Activated T-helper 2 cell treated with anti-CD3 and anti-CD28 coated beads, Interferon-gamma antibody, Interleukin-2, Interleukin-4, amounts not matched to agents 10 μg/mL and 5 μg/mL and 100 μg/mL, durations not matched to agents 14 hours and 24 hours and 36 hours (primary cell): ENCODE measurements at regions of chr9 and their contacts with region 1.

Region 1: GRCh38 chr9:91193658-91194391 is 167.9 kb downstream of the AUH start:
- DNase-seq: peak; percentile 87
- H3K4me3 Mint-ChIP-seq: peak overlapping the region; percentile 77
- H3K27ac Mint-ChIP-seq: peak overlapping the region; percentile 96
- H3K4me1 Mint-ChIP-seq: peaks cover 66% of the 10 kb centered on the region
- H3K27me3 Mint-ChIP-seq: no peaks in the 10 kb centered on the region

Region 2: GRCh38 chr9:91036826-91037510 is 156.9 kb before region 1 on chr9:
- intact Hi-C with region 1: loop called (anchors 1 kb)
- DNase-seq: peak; percentile 79
- H3K4me3 Mint-ChIP-seq: peak overlapping the region; percentile 49
- H3K27ac Mint-ChIP-seq: peak overlapping the region; percentile 88
- H3K4me1 Mint-ChIP-seq: peaks cover 61% of the 10 kb centered on the region
- H3K27me3 Mint-ChIP-seq: no peaks in the 10 kb centered on the region

Region 3: GRCh38 chr9:91101611-91102168 is 92.1 kb before region 1 on chr9:
- intact Hi-C with region 1: loop called (anchors 1 kb)
- DNase-seq: peak; percentile 85
- H3K4me3 Mint-ChIP-seq: peak overlapping the region; percentile 78
- H3K27ac Mint-ChIP-seq: peak overlapping the region; percentile 93
- H3K4me1 Mint-ChIP-seq: peaks cover 64% of the 10 kb centered on the region
- H3K27me3 Mint-ChIP-seq: no peaks in the 10 kb centered on the region

Region 4: DNA sequence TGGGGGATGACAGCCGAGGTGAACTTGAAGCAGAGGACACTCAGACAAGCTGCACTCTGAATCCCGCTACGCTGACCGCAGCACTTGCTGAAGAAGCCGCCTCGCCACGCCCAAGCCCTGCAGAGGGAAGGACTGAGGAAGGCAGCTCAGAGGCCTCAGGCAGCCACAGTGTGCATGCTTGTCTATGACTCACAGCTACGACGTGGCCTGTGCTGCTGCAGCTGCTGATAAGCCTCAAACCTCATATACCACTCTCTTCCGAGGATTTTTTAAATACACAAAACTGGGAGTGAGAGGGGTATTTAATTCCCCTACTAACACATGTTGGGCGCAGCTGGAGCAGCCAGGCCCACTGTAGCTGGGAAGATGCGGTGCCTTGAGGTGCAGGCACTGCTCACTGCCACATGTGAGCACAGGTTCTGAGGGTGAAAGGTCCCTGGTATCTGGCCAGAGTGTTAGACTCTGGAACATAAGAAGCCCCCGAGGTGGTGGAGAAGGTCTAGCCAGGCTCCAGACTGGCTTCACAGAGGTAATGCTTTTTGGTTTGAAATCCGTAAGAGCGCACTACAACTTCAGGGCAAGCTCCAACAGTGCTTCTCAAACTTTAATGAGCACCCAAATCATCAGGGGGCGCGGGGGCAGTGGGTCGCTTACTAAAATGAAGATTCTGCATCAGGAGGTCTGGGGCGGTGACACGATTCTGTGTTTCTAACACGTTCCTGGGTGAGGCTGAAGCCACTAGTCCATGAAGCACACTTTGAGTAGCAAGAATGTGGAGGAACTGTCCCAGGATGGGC is 28.9 kb before region 1 on chr9:
- intact Hi-C with region 1: loop called (anchors 1 kb)
- DNase-seq: peak; percentile 82
- H3K4me3 Mint-ChIP-seq: peak overlapping the region; percentile 84
- H3K27ac Mint-ChIP-seq: peak overlapping the region; percentile 98
- H3K4me1 Mint-ChIP-seq: peaks cover 58% of the 10 kb centered on the region
- H3K27me3 Mint-ChIP-seq: no peaks in the 10 kb centered on the region

Region 5: GRCh38 chr9:91245431-91246313 is 51.8 kb after region 1 on chr9:
- intact Hi-C with region 1: loop called (anchors 1 kb)
- DNase-seq: no peak
- H3K4me3 Mint-ChIP-seq: peak overlapping the region; percentile 10
- H3K27ac Mint-ChIP-seq: peak overlapping the region; percentile 80
- H3K4me1 Mint-ChIP-seq: peaks cover 62% of the 10 kb centered on the region
- H3K27me3 Mint-ChIP-seq: no peaks in the 10 kb centered on the region

Region 6: DNA sequence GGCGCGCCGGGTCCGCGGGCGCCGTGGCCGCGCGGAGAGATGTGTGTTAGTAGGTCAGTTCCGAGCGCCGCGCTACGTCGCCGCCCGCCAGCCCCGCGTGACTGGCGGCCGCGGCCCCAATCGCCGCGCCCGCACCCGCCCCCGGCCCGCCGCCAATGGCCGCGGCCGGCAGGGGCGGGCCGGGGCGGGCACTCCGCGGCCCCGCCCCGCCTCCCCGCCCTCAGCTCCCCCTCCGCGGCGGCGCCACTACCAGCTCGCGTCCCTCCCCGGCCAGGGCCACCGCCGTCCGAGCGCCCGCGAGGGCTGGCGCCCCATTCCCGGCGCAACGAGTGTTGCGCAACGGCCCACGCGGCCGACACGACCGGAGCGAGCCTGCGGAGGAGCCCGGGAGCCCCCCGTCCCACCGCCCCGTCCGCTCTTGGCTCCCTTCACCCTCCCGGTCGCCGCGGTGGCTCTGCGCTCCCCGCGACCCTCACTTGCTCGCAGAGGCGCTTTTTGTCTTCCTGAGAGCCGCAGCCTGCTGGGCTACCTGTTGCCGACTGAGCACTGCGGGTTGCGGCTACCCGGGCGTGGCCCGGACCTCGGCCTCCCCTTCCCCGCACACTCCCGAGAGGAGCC is 230.1 kb after region 1 on chr9 and contains the start of gene NFIL3:
- intact Hi-C with region 1: loop called (anchors 1 kb)
- DNase-seq: peak; percentile 71
- H3K4me3 Mint-ChIP-seq: peak within 1 kb of the TSS; percentile 100
- H3K27ac Mint-ChIP-seq: peak within 1 kb of the TSS; percentile 99
- H3K4me1 Mint-ChIP-seq: peaks cover 51% of the 10 kb centered on the region
- H3K27me3 Mint-ChIP-seq: no peaks in the 10 kb centered on the region
- total RNA-seq, gene NFIL3: 191 and 192 TPM in 2 replicates